ENCODE measurements at regions of chr7 and their contacts with region 1.

Region 1: GRCh38 chr7:106793015-106793975 is 71.8 kb upstream of the PIK3CG start:
- DNase-seq: peak; percentile 58
- ATAC-seq: no peak
- H3K4me3 Mint-ChIP-seq: no peak overlapping the region
- H3K27ac Mint-ChIP-seq: no peak overlapping the region
- H3K4me1 Mint-ChIP-seq: no peaks in the 10 kb centered on the region
- H3K27me3 Mint-ChIP-seq: no peaks in the 10 kb centered on the region

Region 2: DNA sequence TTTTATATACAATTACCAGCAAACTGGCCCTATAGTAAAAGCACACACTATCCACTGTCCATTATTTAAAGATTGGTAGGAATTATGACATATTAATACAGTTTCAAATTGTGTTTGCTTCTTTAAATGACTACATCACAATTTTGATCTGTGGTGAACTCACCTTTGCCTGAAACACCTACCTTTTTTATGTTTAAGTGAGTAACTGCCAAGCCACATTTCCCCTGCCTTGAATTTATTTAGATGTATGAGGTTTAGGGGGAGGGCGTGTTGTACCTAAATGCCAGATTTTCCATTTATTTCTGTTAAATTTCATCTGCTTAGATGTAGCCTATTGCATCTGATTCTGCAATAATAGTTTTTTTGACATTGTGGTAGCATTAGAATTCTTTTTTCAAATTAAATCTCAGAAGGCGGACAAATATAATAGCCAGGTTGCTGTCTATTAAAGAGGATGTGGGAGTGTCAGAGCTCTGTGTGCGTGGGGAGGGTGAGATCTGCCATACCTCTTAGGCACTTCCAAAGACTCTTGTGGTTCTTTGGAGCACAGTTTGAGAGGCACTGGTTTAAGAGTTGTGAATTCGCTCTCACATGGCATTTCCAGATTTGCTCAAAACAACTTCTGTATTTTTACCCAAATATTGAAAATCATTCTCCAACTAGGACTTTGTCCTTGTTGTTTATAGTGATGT is 85.6 kb after region 1 on chr7:
- CTCF ChIA-PET with region 1: no interaction called
- POLR2A ChIA-PET with region 1: no interaction called
- DNase-seq: no peak
- ATAC-seq: no peak
- H3K4me3 Mint-ChIP-seq: no peak overlapping the region
- H3K27ac Mint-ChIP-seq: no peak overlapping the region
- H3K4me1 Mint-ChIP-seq: peaks cover 31% of the 10 kb centered on the region
- H3K27me3 Mint-ChIP-seq: no peaks in the 10 kb centered on the region

Region 3: DNA sequence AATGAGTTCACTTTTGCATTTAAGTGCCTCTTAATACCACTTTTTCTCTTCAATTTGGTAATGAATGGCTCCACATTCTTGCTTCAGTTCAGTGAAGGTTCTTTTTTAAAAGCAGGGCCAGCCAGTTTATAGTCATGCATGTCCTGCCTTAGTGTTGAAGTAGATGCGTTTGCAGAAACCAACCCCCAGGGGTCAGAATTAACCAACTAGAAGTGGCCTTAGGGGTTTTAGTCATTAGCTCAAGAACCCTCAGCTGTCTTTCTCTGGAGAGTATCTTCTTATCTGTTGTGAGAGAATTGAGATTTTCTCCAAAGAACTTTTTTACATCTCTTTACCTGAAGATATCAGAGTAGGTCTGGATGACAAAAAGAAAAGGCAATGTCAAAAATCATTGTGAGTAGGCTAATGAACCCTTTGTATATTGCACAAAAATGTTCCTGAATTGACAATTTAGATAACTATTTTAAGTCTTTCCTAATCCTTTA is 154.0 kb after region 1 on chr7:
- CTCF ChIA-PET with region 1: interaction called, 12 read pairs
- POLR2A ChIA-PET with region 1: no interaction called
- DNase-seq: peak; percentile 50
- ATAC-seq: no peak
- H3K4me3 Mint-ChIP-seq: no peak overlapping the region
- H3K27ac Mint-ChIP-seq: no peak overlapping the region
- H3K4me1 Mint-ChIP-seq: no peaks in the 10 kb centered on the region
- H3K27me3 Mint-ChIP-seq: peaks cover 8% of the 10 kb centered on the region

Measured in activated CD8-positive, alpha-beta T cell treated with anti-CD3 and anti-CD28 coated beads, Interleukin-2, amount 10 ng/mL, durations not matched to agents 7 days and 5 days (primary cell).